Heart left ventricle (tissue), 16 donors: ENCODE measurements at regions of chr2 and their contacts with region 1.

Region 1: GRCh38 chr2:119598596-119599263 is 54.5 kb downstream of the CFAP221 start:
- DNase-seq: no peak
- ATAC-seq: peak; percentile 73 to 88 (median 76)
- H3K4me3 ChIP-seq: no peak overlapping the region
- H3K27ac ChIP-seq: peak overlapping the region in 8 of 12 donors; percentile 29 to 82 (median 64)
- H3K4me1 ChIP-seq: peaks cover 0 to 36% (median 2%) of the 10 kb centered on the region in 12 donors
- H3K27me3 ChIP-seq: no peaks in the 10 kb centered on the region
- CTCF ChIP-seq: no peak
- POLR2A ChIP-seq: no peak

Region 2: DNA sequence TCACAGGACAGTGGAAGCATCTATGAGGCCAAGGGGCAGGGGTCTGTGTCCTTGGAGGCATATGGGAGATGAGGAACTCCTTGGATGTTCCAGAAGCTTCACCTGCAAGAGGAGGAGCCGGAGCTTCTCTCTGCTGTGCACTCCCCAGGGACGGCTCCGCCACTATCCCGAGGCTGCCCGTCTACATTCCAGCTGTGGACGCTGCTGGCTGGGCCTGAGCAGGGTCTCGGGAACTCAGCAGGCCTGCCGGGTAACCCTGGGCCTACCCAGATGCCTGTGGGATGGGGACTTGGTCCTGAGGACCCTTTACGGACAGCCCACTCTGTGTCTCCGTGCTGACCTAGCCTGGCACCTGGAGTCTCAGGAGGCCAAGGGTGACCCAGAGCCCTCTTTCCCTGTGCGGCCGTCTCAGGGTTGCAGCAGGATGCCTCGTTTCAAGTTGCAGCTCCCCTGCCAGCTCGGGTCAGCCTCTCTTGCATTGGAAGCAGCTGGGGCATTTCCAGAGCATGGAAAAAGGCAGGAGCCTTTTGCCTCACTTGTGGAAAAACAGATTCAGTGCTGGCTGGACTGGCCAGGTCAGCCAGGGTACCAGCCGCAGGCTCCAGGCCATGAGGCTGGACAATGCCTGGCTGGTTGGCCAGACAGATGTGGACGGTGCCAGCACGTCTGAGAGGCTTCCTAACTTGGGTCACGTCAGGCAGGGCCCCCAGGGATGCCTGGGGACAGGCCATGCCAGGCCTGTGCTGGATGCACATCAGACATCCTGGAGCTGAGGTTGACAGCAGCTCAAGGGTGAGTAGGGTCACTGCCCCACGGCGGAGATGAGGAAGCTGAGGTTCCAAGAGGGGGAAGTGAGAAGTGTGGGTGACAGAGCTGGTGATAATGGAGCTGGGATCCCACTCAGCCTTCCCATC is 116.0 kb before region 1 on chr2:
- intact Hi-C with region 1: loop called in 2 of 10 experiments (anchors 5 kb)
- DNase-seq: peak in 4 of 5 donors; percentile 48 to 85 (median 62)
- ATAC-seq: peak; percentile 38 to 49 (median 42)
- H3K4me3 ChIP-seq: no peak overlapping the region
- H3K27ac ChIP-seq: peak overlapping the region in 11 of 12 donors; percentile 26 to 88 (median 76)
- H3K4me1 ChIP-seq: peaks cover 0 to 68% (median 37%) of the 10 kb centered on the region in 12 donors
- H3K27me3 ChIP-seq: peaks cover 0 to 4% (median 0%) of the 10 kb centered on the region in 9 donors
- CTCF ChIP-seq: no peak
- POLR2A ChIP-seq: no peak

Region 3: DNA sequence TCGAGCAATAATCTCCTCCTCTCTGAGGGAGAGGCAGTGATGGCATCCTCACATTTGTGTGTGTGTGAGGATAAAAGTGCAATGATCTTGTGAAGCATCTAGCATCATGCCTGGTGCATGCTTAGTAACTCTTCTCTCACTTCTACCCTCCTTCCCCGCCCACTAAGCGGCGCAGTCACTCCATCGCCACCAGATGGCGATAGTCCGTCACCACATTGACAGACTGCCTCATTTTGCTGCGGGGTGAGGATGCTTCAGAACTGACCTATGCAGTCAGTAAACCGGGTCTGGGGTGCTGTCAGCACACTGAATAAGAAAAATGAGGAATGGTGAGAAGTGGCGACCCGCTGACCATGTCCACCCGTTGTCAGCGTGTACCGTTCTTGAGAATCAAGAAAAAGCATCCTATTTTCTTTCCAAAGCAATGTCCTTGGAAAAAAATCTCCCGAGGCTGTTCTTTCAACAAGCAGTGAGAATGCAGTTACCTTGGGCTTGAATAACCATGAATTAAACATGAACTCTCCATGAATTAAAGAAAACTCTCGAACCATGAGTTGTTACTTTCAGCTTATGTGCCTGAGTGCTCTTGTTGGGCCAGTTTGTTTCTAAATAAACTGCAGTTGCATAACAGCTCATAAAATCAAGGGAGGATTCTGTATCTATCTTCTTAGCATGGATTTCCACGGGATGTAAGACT is 43.0 kb after region 1 on chr2:
- intact Hi-C with region 1: no loop called
- DNase-seq: peak; percentile 56 to 74 (median 66)
- ATAC-seq: peak; percentile 56 to 94 (median 88)
- H3K4me3 ChIP-seq: no peak overlapping the region
- H3K27ac ChIP-seq: no peak overlapping the region
- H3K4me1 ChIP-seq: peaks cover 0 to 14% (median 8%) of the 10 kb centered on the region in 12 donors
- H3K27me3 ChIP-seq: peaks cover 0 to 6% (median 0%) of the 10 kb centered on the region in 9 donors
- CTCF ChIP-seq: peak; percentile 86 to 95 (median 92)
- POLR2A ChIP-seq: no peak